OCI-LY7 (cell line): ENCODE measurements at regions of chr10 and their contacts with region 1.

Region 1: DNA sequence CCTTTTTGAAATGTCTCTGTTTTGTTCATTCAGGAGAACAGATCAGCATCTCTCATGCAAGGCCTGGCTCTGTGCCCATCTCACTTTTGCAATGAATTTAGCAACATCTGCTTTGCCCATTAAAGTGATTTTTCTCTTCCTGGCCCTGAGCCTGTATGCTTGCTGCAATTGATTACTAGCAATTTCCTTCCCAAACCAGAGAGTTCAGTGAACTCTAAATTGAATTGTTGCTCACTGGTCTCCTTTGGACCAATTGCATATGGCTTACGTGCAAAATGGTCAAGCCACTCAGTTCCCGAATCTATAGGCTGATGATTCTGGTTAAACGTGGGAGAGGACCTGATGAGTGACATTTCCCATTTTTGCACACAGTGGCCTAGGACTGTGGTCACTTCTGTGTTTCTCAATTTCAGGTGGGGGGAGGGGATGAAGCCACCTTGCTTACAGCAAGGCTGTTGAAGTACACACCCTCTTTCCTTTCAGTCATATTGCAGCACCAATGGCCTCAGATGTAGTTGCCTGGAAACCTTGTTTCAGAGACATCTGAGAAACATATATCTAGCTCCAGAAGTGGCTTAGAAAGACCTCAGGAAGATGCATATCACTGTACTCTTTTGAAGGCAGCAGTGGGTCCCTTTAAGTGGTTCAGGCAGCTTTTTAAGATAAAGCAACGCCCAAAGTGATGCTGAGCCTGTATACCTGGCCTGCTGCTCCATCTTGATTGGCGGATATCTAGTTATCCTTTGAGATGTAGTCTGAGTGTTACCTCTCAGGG is 201.4 kb downstream of the PTEN start:
- DNase-seq: no peak
- H3K4me3 ChIP-seq: no peak overlapping the region
- H3K27ac ChIP-seq: no peak overlapping the region
- H3K4me1 ChIP-seq: peaks cover 89% of the 10 kb centered on the region
- CTCF ChIP-seq: no peak

Region 2: DNA sequence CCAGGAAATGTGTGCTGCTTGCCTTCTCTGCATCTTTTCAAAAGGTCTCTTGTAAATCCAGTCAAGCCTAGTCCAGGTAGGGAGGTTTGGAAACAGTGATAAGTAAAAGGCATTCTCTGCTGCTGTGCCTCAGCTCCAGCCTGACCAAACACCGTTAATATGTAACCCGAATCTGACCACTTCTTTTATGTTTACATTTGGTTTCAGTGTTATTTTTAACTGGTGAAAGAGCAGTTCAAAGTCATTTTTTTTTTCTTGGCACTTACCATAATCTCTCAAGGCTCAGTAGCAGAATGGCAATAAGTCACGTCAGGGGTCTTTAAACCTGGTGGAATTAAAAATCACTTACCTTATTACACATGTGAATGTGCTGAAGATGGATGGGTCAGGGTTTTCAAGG is 15.4 kb after region 1 on chr10:
- CTCF ChIA-PET with region 1: interaction called, 3 read pairs
- POLR2A ChIA-PET with region 1: interaction called, 35 read pairs
- intact Hi-C with region 1: no loop called
- DNase-seq: peak; percentile 44
- H3K4me3 ChIP-seq: peak overlapping the region; percentile 26
- H3K27ac ChIP-seq: peak overlapping the region; percentile 13
- H3K4me1 ChIP-seq: peaks cover 67% of the 10 kb centered on the region
- CTCF ChIP-seq: no peak

Region 3: DNA sequence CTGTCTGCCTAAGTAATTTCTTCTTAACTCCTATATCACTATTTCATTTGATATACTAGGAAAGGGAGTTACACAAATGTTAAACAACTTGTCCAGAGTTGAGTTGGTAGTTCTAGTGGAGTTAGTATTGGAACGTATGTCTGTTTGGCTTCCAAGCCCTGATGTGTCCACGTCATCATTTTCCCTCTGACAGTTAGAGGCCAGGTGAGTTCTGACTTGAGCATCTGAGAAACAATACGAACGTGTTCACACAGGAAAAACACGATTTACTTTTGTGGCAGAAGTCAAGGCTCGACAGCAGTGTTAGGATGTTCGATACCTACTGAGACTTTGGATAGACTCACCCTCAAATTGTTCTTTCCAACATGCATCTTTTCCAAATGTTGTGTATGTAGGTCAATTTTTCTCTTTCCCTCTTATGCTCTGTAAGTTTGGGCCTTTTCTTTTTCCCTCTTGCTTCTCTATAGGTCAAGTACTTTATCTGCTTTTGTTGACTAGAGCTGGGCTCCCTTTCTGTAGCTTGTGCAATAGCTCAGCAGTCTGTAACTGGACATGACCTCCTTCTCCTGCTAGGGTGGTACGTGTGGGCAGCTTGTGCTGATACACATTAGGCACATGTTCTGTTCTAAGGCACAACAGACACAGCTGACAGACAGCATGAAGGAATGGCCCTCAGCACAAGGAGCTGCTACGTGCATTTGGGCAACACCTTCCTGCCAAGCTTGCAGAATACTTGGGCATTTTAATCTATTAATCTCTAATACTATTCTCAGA is 21.6 kb after region 1 on chr10:
- CTCF ChIA-PET with region 1: interaction called, 4 read pairs
- POLR2A ChIA-PET with region 1: interaction called, 35 read pairs
- intact Hi-C with region 1: no loop called
- DNase-seq: no peak
- H3K4me3 ChIP-seq: no peak overlapping the region
- H3K27ac ChIP-seq: no peak overlapping the region
- H3K4me1 ChIP-seq: peaks cover 43% of the 10 kb centered on the region
- CTCF ChIP-seq: no peak

Region 4: DNA sequence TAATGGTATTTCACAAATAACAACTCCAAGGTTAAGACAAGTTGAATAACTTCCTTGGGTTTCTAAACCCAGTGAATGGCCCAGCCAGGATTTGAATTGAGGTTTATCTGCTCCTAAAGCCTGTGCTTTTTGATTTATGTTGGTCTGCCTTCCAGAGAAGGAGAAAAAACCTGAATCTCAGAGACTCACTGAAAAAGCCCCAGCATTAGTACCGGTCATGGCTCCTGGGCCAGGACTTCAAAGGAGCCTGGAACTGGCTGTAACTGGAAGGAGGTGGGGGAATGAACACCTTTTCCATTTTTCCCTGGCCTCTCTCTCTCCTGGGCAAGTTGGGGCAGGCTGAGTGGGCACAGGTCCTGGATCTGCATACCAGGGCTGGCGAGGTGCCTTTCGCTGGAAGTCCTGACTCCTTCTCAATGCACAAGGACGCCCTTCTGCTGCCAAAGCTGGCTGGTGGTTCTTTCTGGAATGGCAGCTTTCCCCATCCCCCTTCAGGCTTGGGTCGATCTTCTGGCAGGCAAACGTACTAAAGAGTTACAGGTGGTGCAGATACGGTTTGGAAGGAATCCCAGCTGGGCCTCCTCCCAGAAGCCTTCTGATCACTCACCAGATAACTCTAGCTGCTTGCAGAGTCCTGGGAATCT is 66.8 kb after region 1 on chr10:
- CTCF ChIA-PET with region 1: no interaction called
- POLR2A ChIA-PET with region 1: no interaction called
- intact Hi-C with region 1: no loop called
- DNase-seq: no peak
- H3K4me3 ChIP-seq: no peak overlapping the region
- H3K27ac ChIP-seq: no peak overlapping the region
- H3K4me1 ChIP-seq: no peaks in the 10 kb centered on the region
- CTCF ChIP-seq: no peak

Region 5: DNA sequence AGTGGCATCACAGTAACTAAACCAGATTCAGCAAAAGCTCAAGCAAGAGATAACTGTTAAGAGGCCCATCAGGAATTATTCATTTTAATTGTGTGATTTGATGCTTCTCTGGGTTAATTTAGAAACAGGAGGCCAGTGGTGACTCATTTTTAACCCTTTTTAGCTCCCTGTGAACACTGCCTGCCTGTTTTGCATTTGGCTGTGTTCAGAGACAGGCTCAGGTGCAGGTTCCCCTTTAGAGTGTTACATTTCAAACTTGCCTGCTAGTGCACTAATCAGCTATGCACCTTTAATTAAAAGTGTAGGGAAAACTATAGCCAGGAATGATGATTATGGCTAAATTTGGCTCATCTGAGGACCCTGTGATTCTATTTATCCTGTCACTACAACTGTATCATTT is 821.8 kb after region 1 on chr10:
- CTCF ChIA-PET with region 1: no interaction called
- POLR2A ChIA-PET with region 1: no interaction called
- intact Hi-C with region 1: loop called (anchors 5 kb)
- DNase-seq: peak; percentile 78
- H3K4me3 ChIP-seq: peak overlapping the region; percentile 80
- H3K27ac ChIP-seq: peak overlapping the region; percentile 93
- H3K4me1 ChIP-seq: peaks cover 94% of the 10 kb centered on the region
- CTCF ChIP-seq: no peak